HEK293 (cell line): ENCODE measurements at regions of chr17 and their contacts with region 1.

Region 1: GRCh38 chr17:43576563-43577229 is 30.6 kb upstream of the ETV4 start:
- H3K4me3 ChIP-seq: no peak overlapping the region
- H3K27ac ChIP-seq: no peak overlapping the region
- H3K4me1 ChIP-seq: peaks cover 14% of the 10 kb centered on the region
- CTCF ChIP-seq: peak; percentile 81

Region 2: GRCh38 chr17:43360739-43361505 is 215.8 kb before region 1 on chr17:
- CTCF ChIA-PET with region 1: no interaction called
- POLR2A ChIA-PET with region 1: no interaction called
- H3K4me3 ChIP-seq: no peak overlapping the region
- H3K27ac ChIP-seq: no peak overlapping the region
- H3K4me1 ChIP-seq: no peaks in the 10 kb centered on the region
- CTCF ChIP-seq: no peak

Region 3: GRCh38 chr17:43393944-43394482 is 182.7 kb before region 1 on chr17:
- CTCF ChIA-PET with region 1: interaction called, 6 read pairs
- POLR2A ChIA-PET with region 1: interaction called, 10 read pairs
- H3K4me3 ChIP-seq: no peak overlapping the region
- H3K27ac ChIP-seq: no peak overlapping the region
- H3K4me1 ChIP-seq: 0 out of 2 replicates have a peak, but pooled peaks cover 3% of the 10 kb centered on the region
- CTCF ChIP-seq: peak; percentile 81

Region 4: GRCh38 chr17:43463241-43463640 is 113.5 kb before region 1 on chr17:
- CTCF ChIA-PET with region 1: no interaction called
- POLR2A ChIA-PET with region 1: no interaction called
- H3K4me3 ChIP-seq: no peak overlapping the region
- H3K27ac ChIP-seq: no peak overlapping the region
- H3K4me1 ChIP-seq: no peaks in the 10 kb centered on the region
- CTCF ChIP-seq: no peak

Region 5: DNA sequence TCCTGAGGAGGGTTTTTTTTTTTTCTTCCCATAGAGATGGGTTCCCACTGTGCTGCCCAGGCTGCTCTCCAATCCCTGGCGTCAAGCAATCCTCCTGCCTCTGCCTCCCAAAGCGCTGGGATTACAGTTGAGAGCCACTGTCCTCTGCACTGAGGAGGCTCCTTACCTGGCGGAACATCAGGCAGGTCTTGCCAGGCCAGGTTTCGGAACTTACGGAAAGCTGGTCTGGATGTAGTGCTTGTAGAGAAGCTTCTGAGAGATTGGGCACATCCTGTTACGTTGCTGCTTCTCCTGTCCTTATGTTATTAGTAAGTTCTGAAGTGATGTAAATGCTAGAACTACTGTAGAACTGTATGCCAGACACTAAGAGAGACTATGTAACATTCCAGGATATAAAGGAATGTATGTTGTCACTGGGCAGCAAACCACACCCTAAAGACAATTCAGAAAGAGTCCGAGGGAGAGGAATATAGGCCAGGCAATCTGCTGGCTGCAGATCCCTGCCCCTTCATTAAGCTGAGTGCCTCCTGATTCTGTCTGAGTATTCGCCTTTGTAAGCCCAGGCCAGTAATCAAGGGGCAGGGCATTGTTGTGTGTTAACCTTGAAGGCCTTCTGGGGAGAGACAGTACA is 51.6 kb before region 1 on chr17:
- CTCF ChIA-PET with region 1: interaction called, 55 read pairs
- POLR2A ChIA-PET with region 1: interaction called, 3 read pairs
- H3K4me3 ChIP-seq: no peak overlapping the region
- H3K27ac ChIP-seq: no peak overlapping the region
- H3K4me1 ChIP-seq: peaks cover 3% of the 10 kb centered on the region; the same call in 1 of the 2 replicates
- CTCF ChIP-seq: no peak

Region 6: DNA sequence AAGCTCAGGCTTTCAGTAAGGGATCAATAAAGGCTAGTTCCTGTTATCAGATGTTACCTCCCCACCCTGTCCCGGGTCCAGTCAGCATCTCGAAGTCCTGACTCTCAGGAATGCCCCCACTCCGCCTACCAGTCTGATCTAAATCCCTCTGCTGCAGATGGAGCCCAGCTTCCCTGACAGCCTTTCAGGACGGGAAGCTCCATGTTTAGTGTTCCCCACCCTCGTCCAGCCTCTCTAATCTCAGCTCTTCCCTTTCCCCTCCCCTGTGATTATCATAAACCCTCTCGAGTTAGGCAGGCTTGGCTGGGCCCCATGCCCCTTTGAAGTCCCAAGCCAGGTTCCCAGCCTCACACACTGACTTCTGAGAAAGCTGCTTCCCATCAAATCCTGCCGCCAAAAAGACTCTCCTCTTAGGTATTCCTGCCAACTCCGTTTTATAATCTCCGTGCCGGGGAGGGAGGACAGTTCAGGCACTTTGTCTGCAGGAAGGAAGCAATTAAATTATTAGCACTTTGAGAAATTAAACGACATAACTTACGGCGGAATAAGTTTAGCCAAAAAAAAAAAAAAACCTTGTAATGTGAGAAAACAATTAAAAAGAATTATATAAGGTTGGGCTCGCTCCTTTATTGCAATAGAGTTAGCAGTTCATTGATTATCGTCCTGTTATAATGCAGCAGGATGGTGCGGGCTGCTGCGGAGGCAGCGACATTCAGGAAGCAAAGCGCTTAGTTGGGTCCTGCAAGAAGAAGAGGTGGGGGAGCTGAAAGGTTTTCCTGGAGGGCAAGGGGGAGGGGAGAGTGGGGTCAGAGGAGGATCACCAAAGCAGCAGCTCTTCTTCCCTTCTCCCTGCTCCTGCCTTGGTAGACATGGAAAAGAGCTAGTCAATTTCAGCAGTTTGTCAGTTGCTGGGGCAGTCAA is 13.8 kb before region 1 on chr17:
- CTCF ChIA-PET with region 1: interaction called, 20 read pairs
- POLR2A ChIA-PET with region 1: no interaction called
- H3K4me3 ChIP-seq: no peak overlapping the region
- H3K27ac ChIP-seq: no peak overlapping the region
- H3K4me1 ChIP-seq: peaks cover 12% of the 10 kb centered on the region
- CTCF ChIP-seq: no peak

Region 7: DNA sequence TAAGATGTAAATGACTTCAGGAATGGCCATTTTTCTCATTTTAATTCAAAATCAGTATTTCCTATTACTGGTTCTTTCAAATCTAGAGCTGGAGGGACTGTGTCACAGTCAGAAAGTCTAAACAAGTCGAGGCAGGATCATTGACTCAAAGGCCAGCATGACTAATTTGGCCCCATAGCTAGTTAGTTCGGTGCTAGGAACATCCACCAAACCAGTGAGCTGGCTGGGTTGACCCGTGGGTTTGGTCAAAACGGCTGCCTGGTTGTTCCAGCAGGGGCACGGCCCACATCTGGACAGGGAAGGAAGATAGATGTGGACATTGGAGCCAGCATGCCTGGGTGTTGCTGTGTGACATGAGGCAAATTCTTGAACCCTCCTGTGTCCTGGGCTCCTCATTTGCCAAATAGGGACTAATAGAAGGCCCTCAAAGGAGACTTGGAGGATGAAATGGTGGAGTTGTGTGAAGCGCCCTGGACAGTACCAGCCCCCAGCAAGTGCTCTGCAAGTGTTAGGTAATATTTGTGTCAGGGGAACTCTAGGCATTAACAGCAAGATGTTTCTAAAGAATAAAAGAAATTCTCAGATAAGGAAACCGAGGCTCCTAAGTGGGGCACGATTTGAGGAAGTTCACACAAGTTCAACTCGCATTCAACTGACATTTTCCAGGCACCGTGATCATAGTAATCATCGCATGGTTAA is 38.8 kb after region 1 on chr17:
- CTCF ChIA-PET with region 1: interaction called, 13 read pairs
- POLR2A ChIA-PET with region 1: no interaction called
- H3K4me3 ChIP-seq: no peak overlapping the region
- H3K27ac ChIP-seq: no peak overlapping the region
- H3K4me1 ChIP-seq: no peaks in the 10 kb centered on the region
- CTCF ChIP-seq: no peak

Region 8: DNA sequence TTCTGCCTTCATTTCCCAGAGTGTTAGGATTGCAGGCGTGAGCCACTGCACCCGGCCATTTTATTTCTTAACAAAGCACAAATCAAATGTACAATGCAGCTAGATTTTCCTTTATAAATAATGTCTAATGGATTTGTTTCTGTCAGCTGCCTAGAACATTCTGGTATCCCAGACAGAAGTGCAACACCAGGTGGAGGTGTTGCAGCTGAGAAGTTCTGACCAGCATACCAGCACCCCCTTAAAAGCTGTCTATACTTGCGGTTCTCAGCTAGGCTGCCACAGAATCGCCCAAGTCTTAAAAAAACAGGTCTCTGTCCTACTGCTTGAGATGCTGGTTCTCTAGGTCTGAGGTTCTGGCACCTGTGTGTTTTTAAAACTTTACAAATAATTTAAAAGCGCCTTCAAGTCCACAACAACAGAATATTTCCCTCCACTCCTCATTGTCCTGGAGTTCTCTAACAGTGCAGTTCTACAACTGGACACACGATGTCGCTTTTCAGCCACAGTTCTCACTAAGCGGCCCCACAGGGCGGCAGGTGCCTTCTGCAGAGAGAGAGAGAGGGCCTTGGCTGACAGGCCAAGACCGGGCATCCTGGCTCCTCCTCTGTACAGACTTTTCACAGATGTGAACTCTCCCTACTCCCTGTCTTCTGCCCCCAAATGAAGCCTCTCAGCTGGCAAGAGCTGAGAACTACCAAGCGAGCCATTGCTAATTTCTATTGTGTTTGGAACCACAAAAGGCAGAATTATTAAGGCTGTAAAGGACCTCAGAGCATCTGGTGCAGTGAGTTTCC is 117.6 kb after region 1 on chr17:
- CTCF ChIA-PET with region 1: interaction called, 128 read pairs
- POLR2A ChIA-PET with region 1: interaction called, 3 read pairs
- H3K4me3 ChIP-seq: no peak overlapping the region
- H3K27ac ChIP-seq: no peak overlapping the region
- H3K4me1 ChIP-seq: no peaks in the 10 kb centered on the region
- CTCF ChIP-seq: peak; percentile 90